Sciatic nerve (tissue), 2 donors: ENCODE measurements at regions of chr2 and their contacts with region 1.

Region 1: GRCh38 chr2:126761981-126762878 is 106.3 kb downstream of the GYPC start:
- DNase-seq: no peak
- ATAC-seq: no peak

Region 2: DNA sequence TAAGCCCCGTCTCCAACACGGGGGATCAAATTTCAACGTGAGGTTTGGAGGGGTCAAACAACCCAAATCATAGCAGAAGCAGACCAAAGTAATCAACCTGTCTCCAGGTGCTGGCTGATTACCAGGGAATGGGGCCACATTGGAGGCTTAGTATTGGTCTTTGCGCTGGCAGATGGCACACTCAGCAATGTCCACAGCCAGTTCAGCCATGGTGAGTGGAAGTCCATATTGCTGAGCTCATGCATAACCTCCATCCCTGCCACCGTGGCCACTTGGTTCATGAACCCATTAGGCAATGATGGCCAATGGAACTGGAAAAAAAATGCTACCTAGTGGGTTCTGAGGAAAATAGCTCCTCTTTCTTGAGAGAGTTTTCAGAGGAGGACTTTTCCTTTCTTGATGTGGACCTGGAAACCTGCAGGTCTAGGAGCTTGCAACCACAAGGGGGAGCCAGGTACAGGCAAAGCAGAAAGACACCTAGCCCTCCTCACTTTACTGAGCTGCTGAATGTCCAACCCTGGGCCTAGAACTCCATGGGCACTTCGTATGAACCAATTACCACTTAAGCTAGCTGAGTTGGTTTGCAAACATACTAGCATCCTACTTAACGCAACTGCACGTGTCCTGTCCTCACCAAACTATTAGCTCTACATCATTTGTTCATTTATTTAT is 234.3 kb before region 1 on chr2:
- intact Hi-C with region 1: loop called (anchors 10 kb)
- DNase-seq: peak; percentile 72
- ATAC-seq: peak; percentile 59